Sciatic nerve (tissue), 2 donors: ENCODE measurements at regions of chr3 and their contacts with region 1.

Region 1: DNA sequence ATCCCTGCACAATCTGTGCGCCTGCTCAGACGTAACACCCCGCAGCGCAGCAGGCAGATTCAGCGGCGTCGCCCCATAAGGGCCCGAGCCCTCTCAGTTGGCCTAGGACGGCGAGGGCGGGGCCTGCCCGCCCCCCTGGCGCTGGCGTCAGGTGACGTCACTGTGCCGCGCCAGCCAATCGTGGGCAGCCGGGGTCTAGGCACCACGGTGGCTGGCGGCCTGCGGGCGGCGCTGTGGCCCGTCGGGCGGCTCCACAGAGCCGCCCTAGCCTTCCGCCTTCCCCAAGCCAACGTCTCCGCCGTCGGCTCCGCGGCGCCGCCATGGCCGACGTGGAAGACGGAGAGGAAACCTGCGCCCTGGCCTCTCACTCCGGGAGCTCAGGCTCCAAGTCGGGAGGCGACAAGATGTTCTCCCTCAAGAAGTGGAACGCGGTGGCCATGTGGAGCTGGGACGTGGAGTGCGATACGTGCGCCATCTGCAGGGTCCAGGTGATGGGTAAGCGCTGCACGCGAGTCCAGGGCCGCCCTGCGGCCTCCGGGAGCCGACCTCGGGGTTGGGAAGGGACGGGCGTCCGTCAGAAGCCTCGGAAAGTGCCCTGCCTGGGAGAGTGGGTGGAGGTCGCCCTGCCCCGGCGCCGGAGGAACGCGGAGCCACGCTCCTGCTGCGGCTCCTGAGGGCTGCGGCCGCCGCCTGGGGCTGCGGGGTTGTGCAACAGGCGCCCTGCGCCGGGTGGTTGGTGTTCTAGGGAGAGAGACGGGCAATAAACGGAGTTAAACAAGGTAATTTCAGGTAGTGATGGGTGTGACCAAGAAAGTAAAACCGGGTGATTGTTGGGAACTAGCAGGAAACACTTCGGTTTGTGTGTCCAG is at the start of gene RNF7:
- DNase-seq: peak; percentile 97
- ATAC-seq: peak; percentile 99
- total RNA-seq, gene RNF7: 62.8 TPM

Region 2: DNA sequence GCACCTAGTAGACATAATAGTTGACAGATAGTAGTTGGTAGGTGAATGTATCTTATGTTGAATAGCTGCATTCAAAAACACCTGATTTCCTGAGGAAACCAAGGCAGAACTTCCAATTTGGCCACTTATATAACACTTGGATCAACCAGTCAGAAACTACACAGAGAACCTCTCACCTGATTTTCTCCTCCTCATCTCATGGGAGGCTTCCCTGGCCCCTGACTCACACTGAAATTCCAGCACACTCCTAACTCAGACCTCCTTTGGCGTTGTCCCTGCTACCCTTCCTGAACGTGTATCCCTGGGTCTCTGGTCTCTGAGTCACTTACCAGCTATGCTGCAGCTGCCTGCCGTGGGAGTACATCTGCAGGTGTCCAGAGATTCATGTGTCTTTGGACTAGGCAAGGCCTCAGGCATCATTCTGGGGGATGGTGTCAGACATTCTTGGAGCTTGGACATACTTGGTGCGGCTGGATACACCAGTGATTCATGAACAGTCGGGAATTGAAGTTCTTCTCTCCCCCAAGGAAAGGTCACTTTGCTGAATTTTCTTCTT is 1209.2 kb before region 1 on chr3:
- intact Hi-C with region 1: no loop called
- DNase-seq: no peak
- ATAC-seq: peak; percentile 24

Region 3: GRCh38 chr3:141875374-141875892 is 137.2 kb after region 1 on chr3:
- intact Hi-C with region 1: loop called (anchors 10 kb)
- DNase-seq: peak; percentile 92
- ATAC-seq: peak; percentile 94

Region 4: GRCh38 chr3:143548393-143548792 is 1810.1 kb after region 1 on chr3:
- intact Hi-C with region 1: loop called (anchors 5 kb)
- DNase-seq: no peak
- ATAC-seq: no peak